ENCODE measurements at regions of chr12 and their contacts with region 1.

Region 1: GRCh38 chr12:111396726-111397445 is 8.8 kb upstream of the SH2B3 start:
- DNase-seq: no peak
- H3K4me3 ChIP-seq: peak overlapping the region; percentile 38
- CTCF ChIP-seq: peak; percentile 99

Region 2: DNA sequence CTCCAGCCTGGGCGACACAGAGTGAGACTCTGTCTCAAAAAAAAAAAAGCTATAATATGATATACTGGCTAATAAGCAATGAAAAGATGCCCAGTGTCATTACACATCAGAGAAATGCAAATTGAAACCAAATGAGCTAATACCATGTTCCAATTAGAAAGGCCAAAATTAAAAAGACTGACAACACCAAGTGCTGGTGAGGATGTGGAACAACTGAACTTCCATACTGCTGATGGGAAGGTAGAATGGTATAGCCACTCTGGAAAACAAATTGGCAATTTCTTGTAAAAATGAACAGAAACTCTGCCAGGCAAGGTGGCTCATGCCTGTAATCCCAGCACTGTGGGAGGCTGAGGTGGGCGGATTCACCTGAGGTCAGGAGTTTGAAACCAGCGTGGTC is 19.4 kb before region 1 on chr12:
- CTCF ChIA-PET with region 1: interaction called, 72 read pairs
- POLR2A ChIA-PET with region 1: no interaction called
- DNase-seq: no peak
- H3K4me3 ChIP-seq: no peak overlapping the region
- CTCF ChIP-seq: no peak

Region 3: GRCh38 chr12:111428728-111429175 is 31.9 kb after region 1 on chr12:
- CTCF ChIA-PET with region 1: interaction called, 899 read pairs
- POLR2A ChIA-PET with region 1: no interaction called
- DNase-seq: no peak
- H3K4me3 ChIP-seq: no peak overlapping the region
- CTCF ChIP-seq: no peak

Region 4: GRCh38 chr12:111482462-111482861 is 85.6 kb after region 1 on chr12:
- CTCF ChIA-PET with region 1: interaction called, 35 read pairs
- POLR2A ChIA-PET with region 1: interaction called, 3 read pairs
- DNase-seq: no peak
- H3K4me3 ChIP-seq: no peak overlapping the region
- CTCF ChIP-seq: no peak

Region 5: GRCh38 chr12:111519083-111519482 is 122.2 kb after region 1 on chr12:
- CTCF ChIA-PET with region 1: interaction called, 17 read pairs
- POLR2A ChIA-PET with region 1: no interaction called
- DNase-seq: no peak
- H3K4me3 ChIP-seq: no peak overlapping the region
- CTCF ChIP-seq: no peak

Region 6: GRCh38 chr12:111643427-111643826 is 246.5 kb after region 1 on chr12:
- CTCF ChIA-PET with region 1: interaction called, 10 read pairs
- POLR2A ChIA-PET with region 1: no interaction called
- DNase-seq: peak; percentile 45
- H3K4me3 ChIP-seq: no peak overlapping the region
- CTCF ChIP-seq: no peak

Region 7: DNA sequence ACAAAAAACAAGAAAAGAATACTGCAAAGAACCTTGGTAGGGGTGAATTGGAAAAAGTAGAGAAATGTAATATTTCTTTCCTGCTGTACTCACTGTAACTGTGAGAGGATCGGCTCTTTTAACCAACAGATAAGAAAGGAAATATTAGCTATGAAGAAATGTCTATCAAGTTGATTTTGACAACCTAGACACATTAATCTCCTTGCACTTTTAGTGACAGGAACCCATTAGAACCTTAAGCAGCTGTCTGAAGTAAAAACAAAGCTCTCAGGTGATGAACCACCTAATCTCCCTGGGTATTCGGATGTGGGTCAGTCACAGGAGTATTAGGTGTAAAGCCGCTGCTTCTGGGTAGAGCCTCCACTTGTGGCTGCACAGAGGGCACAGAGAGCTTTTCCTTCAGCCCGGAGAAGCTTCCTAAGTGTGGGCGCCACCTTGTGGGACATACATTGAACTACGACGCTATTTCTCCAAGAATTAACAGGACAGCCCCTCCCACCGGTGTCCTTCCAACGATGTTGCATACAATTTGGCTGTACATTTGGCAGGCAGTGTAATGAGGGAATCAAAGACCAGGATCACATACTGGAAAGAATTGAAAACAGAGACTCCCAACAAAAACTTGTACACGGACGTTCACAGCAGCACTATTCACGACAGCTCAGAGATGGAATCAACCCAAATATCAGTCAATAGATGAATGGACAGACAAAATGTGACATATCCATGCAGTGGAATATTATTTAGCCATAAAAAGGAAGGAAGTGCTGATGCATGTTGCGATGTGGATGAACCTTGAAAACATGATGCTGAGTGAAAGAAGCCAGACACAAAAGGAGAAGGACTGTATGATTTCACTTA is 416.2 kb after region 1 on chr12:
- CTCF ChIA-PET with region 1: interaction called, 16 read pairs
- POLR2A ChIA-PET with region 1: no interaction called
- DNase-seq: peak; percentile 40
- H3K4me3 ChIP-seq: no peak overlapping the region
- CTCF ChIP-seq: peak; percentile 85

Measured in AG04449 (cell line).